ENCODE measurements at regions of chr11 and their contacts with region 1.

Region 1: GRCh38 chr11:9613118-9613829 is 39.8 kb downstream of the WEE1 start:
- DNase-seq: peak; percentile 97
- H3K4me3 ChIP-seq: peak overlapping the region; percentile 33
- H3K4me1 ChIP-seq: peaks cover 33% of the 10 kb centered on the region
- H3K27me3 ChIP-seq: no peaks in the 10 kb centered on the region

Region 2: GRCh38 chr11:9748361-9748970 is 135.2 kb after region 1 on chr11:
- in situ Hi-C with region 1: loop called (anchors 10 kb)
- DNase-seq: peak; percentile 66 to 67
- H3K4me3 ChIP-seq: no peak overlapping the region
- H3K4me1 ChIP-seq: peaks cover 31% of the 10 kb centered on the region
- H3K27me3 ChIP-seq: no peaks in the 10 kb centered on the region

Region 3: DNA sequence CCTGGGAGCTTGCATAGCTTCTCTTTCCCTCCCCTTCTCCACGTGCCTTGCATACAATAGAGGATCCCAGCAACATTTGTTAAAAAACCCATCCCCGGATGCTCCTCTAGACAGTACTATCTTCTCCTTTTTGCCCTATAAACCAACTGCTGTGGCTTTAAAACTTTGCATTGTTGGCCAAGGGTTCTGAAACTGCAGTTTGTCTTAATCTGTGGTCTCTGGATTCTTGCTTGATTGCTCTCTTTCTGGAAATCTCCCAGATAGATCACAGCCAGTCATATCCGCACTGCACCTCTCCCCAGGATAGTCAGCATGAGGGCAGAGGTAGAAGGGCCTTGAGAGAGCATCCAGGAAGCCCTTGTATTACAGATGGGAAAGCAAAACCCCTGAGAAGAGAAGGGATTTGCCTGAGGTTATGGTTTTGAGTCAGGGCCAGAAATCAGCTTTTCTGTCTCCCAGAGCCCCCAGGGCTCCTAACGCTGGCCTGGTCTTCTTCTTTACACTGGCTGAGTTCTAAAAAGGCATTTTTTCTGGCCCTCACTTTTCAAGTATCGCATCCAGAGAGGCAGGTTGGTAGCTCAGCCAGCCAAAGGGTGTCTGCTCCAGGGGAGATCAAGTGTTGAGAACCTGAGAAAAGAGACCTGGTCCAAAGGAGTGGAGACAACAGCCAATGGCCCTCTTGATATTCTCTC is 762.2 kb after region 1 on chr11:
- in situ Hi-C with region 1: no loop called
- DNase-seq: no peak
- H3K4me3 ChIP-seq: no peak overlapping the region
- H3K4me1 ChIP-seq: no peaks in the 10 kb centered on the region
- H3K27me3 ChIP-seq: no peaks in the 10 kb centered on the region